ENCODE measurements at regions of chr9 and their contacts with region 1.

Region 1: DNA sequence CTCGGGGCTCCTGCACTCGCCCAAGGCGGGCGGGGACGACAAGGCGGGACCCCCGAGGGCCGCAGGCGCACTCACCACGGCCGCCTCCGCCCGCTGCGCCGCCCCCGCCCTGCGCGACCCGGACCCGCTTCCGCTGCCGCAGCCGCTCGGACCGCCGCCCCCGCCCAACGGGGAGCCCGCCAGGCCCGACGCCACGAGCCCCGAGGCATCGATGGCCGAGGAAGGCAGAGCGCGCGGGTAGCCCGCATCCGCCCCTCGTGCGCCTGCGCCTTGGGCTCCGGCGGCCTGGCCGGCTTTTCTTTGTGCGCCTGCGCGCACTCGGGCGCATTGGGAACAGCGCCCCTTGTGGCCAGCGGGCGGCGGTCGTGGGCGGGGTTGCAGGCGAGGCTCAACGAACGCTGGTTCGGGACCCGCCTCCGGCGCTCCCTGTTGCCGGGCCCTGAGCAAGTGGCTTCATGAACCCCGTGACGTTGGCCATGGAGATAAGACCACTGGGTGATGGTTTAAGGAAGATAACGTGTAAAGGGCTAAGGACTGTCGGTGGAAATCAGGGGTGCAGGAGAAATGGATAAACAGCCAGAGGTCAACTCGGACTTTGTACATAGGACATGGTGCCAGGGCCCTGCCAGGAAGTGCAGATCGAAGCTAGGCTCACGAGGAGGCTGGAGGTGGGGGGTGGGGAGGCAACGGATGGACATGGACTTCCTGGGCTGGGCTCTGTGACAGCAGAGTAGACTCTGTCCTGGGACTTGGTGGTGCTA is at the starts of genes C8G and FBXW5:
- DNase-seq: peak; percentile 91 to 92
- ATAC-seq: peak; percentile 67 to 68
- H3K4me3 ChIP-seq: peak within 1 kb of the TSS; percentile 79 to 96 (median 92)
- H3K27ac ChIP-seq: peak within 1 kb of the TSS; percentile 92 to 97 (median 96)
- H3K4me1 ChIP-seq: peaks cover 27 to 60% of the 10 kb centered on the region in 2 donors
- H3K27me3 ChIP-seq: no peaks in the 10 kb centered on the region
- CTCF ChIP-seq: peak; percentile 96 to 100 (median 99)
- POLR2A ChIP-seq: peak; percentile 97 to 98
- total RNA-seq, gene C8G: 1.7 to 5.2 TPM in 2 of 4 donors, not detected in the others
- total RNA-seq, gene FBXW5: 329 to 469 (median 435) TPM

Region 2: GRCh38 chr9:136790927-136791641 is 153.6 kb before region 1 on chr9 and contains the start of gene TMEM141:
- in situ Hi-C with region 1: loop called in 1 of 4 experiments (anchors 25 kb)
- intact Hi-C with region 1: loop called (anchors 1 kb)
- DNase-seq: peak; percentile 100
- ATAC-seq: peak; percentile 87 to 91
- H3K4me3 ChIP-seq: peak within 1 kb of the TSS; percentile 66 to 92 (median 81)
- H3K27ac ChIP-seq: peak within 1 kb of the TSS; percentile 94 to 99 (median 95)
- H3K4me1 ChIP-seq: peaks cover 12 to 18% of the 10 kb centered on the region in 2 donors
- H3K27me3 ChIP-seq: no peaks in the 10 kb centered on the region
- CTCF ChIP-seq: no peak
- POLR2A ChIP-seq: peak; percentile 60 to 82
- total RNA-seq, gene TMEM141: 46.9 to 70.2 (median 51.1) TPM

Region 3: DNA sequence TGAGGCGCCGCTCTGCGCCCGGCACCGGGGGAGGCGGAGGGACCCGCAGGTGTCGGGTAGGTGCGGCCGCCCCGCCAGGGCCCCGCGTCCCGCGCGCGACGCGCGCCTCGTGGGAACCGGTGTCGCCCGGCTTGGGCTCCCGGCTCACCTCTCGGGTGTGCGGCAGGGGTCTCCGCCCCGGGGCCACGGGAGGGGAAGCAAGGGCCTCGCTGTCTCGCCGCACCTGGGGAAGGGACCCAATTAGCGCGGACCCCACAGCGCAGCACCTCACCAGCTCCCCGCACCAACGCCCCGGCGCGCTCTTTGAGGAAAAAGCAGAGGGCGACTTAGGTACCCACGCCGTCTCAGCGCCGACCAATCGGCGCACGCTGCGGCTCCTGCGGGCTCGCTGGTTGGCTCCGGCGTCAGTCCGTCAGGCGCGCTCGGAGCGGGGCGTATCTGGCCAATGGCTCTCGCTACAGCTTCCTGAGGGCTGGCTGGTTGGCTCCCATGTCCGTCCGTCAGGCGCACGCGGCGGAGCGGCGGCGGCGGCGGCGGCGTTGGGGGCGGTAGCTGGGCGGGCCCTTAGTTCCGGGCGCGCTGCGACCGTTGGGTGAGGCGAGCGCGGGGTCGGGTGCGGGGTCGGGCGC is 58.6 kb before region 1 on chr9 and contains the start of gene TRAF2:
- in situ Hi-C with region 1: no loop called
- intact Hi-C with region 1: loop called (anchors 5 kb)
- DNase-seq: peak; percentile 97 to 98
- ATAC-seq: peak; percentile 97 to 98
- H3K4me3 ChIP-seq: peak within 1 kb of the TSS; percentile 75 to 91 (median 82)
- H3K27ac ChIP-seq: peak within 1 kb of the TSS; percentile 84 to 92 (median 90)
- H3K4me1 ChIP-seq: peaks cover 13 to 14% of the 10 kb centered on the region in 2 donors
- H3K27me3 ChIP-seq: no peaks in the 10 kb centered on the region
- CTCF ChIP-seq: no peak
- POLR2A ChIP-seq: peak; percentile 58 to 81
- total RNA-seq, gene TRAF2: 3.5 to 6.6 (median 4.8) TPM

Region 4: GRCh38 chr9:136934247-136934646 is 10.5 kb before region 1 on chr9:
- in situ Hi-C with region 1: no loop called
- intact Hi-C with region 1: no loop called
- DNase-seq: no peak
- ATAC-seq: no peak
- H3K4me3 ChIP-seq: no peak overlapping the region
- H3K27ac ChIP-seq: no peak overlapping the region
- H3K4me1 ChIP-seq: peaks cover 13 to 17% of the 10 kb centered on the region in 2 donors
- H3K27me3 ChIP-seq: no peaks in the 10 kb centered on the region
- CTCF ChIP-seq: no peak
- POLR2A ChIP-seq: no peak

Region 5: DNA sequence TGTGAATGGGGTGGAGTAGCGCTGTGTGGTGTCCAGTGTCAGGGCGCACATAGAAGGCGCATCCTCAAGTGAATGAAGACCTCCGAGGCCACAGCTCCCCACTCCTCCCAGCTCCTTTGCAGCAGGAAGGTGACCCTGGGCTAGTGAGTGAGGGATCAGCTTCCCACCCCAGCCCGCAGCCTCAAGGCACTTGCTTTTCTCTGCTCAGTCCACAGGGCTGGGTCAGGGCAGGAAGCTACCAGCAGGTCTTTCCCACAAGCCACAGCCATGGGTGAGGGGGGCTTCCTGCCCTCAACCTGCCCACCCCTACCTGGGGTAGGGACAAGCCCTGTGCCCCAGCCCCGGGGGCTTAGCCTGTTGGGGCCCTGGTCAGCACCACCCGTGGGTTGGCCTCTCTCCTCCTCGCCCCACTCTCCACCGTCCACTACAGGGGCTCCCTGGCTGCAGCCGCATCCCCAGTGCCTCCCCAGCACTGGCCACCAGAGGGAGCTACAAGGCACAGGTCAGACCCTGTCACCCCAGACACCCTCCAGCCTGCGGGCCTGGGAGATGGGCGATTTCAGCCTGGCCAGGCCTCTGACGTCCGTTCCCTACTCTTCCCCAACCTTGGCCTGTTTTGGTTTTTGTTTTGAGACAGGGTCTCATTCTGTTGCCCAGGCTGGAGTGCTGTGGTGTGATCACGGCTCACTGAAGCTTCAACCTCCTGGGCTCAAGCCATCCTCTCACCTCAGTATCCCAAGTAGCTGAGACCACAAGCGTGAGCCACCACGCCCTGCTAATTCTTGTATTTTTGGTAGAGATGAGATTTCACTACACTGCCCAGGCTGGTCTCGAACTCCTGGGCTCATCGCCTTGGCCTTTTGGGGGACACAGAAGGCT is 84.6 kb after region 1 on chr9:
- in situ Hi-C with region 1: loop called in 1 of 4 experiments (anchors 10 kb)
- intact Hi-C with region 1: loop called (anchors 2 kb)
- DNase-seq: peak; percentile 45 to 60
- ATAC-seq: peak; percentile 50 to 60
- H3K4me3 ChIP-seq: peak overlapping the region; percentile 76 to 91 (median 79)
- H3K27ac ChIP-seq: no peak overlapping the region
- H3K4me1 ChIP-seq: peaks cover 20 to 23% of the 10 kb centered on the region in 2 donors
- H3K27me3 ChIP-seq: no peaks in the 10 kb centered on the region
- CTCF ChIP-seq: peak; percentile 64 to 91 (median 87)
- POLR2A ChIP-seq: no peak